Left colon (tissue), 2 donors: ENCODE measurements at regions of chr2 and their contacts with region 1.

Region 1: GRCh38 chr2:239991689-239992314 is 33.3 kb downstream of the NDUFA10 start:
- DNase-seq: no peak
- ATAC-seq: peak; percentile 63

Region 2: DNA sequence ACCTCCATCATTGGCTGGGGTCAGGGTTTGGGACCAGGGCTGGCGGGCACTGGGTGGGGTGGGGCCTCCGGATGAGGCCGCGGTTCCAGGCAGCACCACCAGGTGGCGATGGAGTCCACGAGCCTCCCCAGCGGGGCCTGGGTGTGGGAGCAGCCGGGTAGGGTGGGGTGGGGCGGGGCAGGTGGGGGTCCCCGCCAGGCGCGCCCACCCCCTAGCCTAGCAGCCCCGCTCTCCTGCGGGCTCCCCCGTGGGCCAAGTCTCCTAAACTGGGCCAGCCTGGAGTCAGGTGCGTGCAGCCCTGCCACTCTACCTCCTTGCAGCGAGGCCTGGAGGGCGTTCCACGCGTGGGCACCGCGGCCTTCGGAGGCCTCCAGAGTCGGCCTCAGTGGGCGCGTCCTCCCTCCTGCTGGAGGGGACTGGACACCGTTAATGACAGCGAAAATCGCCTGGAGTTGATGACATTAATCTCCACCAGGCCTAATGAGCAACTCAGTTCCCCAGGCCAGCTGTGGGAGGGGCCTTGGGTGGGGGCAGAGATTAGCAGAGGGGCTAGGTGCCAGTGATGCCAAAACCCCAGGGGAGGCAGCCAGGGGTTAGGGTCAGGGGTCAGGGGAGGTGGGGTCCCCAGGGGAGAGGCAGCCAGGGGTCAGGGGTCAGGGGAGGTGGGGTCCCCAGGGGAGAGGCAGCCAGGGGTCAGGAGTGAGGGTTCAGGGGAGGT is 956.3 kb before region 1 on chr2:
- intact Hi-C with region 1: loop called in 1 of 2 experiments (anchors 10 kb)
- DNase-seq: peak in 1 of 2 donors; percentile 66
- ATAC-seq: peak; percentile 86

Region 3: GRCh38 chr2:239934571-239935171 is 57.1 kb before region 1 on chr2:
- intact Hi-C with region 1: loop called in 1 of 2 experiments (anchors 10 kb)
- DNase-seq: peak; percentile 49 to 71
- ATAC-seq: peak; percentile 88